ENCODE measurements at regions of chr18 and their contacts with region 1.

Region 1: DNA sequence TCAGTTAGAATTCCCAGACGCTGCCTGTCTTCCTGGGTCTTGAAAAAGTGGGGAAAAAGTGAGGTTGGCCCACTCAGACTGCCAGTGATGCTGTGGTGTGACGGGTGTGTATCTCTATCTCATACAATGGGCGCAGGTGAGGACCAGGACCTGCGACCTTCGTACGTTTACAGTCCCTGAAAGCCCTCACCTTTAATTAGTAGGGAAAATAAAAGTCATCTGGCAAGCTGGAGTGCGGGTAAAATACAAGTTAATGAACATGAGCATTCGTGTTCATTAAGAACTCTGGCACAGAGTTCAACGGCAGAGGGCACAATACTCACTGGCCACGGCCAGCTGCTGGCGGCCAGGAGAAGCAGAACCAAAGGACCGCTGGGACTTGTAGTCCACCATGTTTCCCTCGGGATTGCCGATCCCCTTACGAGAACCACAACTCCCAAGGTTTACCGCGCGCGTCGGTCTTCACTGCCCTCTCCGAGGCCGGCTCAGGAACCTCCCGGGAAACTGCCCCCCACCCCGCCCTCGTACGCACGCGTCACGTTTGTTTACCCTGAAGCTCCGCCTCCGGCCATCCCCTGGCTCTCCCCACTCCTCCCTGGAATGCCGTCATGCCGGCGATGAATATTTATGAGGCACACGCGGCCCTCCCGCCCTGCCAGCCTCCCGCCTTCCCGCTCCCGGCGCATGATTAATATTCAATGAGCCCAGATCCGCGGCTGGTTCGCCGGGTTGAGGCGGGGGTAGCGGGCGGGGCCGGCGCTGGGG is 488 bp upstream of the PHLPP1 start:
- DNase-seq: peak; percentile 96
- ATAC-seq: peak; percentile 81
- H3K4me3 ChIP-seq: peak overlapping the region; percentile 6 to 85 (median 75)
- H3K4me3 Mint-ChIP-seq: peak overlapping the region; percentile 95
- H3K27ac ChIP-seq: peak overlapping the region; percentile 85 to 92
- H3K27ac Mint-ChIP-seq: peak overlapping the region; percentile 97
- H3K4me1 ChIP-seq: peaks cover 15 to 18% of the 10 kb centered on the region in 2 donors
- H3K4me1 Mint-ChIP-seq: peaks cover 34% of the 10 kb centered on the region
- H3K27me3 ChIP-seq: no peaks in the 10 kb centered on the region
- H3K27me3 Mint-ChIP-seq: no peaks in the 10 kb centered on the region
- CTCF ChIP-seq: peak; percentile 77

Region 2: GRCh38 chr18:62505669-62506494 is 209.0 kb before region 1 on chr18:
- CTCF ChIA-PET with region 1: no interaction called
- POLR2A ChIA-PET with region 1: no interaction called
- intact Hi-C with region 1: loop called (anchors 5 kb)
- DNase-seq: peak; percentile 78
- ATAC-seq: peak; percentile 84
- H3K4me3 ChIP-seq: peak overlapping the region; percentile 27 to 58 (median 56)
- H3K4me3 Mint-ChIP-seq: peak overlapping the region; percentile 79
- H3K27ac ChIP-seq: peak overlapping the region; percentile 61 to 72
- H3K27ac Mint-ChIP-seq: peak overlapping the region; percentile 95
- H3K4me1 ChIP-seq: peaks cover 15 to 16% of the 10 kb centered on the region in 2 donors
- H3K4me1 Mint-ChIP-seq: peaks cover 13% of the 10 kb centered on the region
- H3K27me3 ChIP-seq: no peaks in the 10 kb centered on the region
- H3K27me3 Mint-ChIP-seq: no peaks in the 10 kb centered on the region
- CTCF ChIP-seq: no peak

Region 3: DNA sequence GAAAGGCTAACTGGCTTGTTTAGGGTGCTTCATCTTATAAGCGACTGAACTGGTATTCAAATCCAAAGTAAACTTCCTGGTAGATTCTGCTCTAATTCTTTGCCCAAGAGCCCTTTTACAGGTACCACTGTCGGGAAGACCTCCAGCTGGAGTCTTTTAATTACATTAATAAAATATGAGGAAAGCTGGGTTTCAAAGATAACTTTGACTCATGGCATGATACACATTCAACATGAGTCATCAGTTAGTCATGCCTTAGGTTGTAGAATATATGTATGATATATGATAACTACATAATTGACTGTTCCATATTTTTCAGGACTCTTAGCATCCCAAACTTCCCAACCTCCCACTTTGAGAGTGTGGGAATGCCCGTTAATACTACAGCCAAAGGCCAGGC is 159.7 kb before region 1 on chr18:
- CTCF ChIA-PET with region 1: no interaction called
- POLR2A ChIA-PET with region 1: no interaction called
- intact Hi-C with region 1: no loop called
- DNase-seq: no peak
- ATAC-seq: no peak
- H3K4me3 ChIP-seq: no peak overlapping the region
- H3K4me3 Mint-ChIP-seq: no peak overlapping the region
- H3K27ac ChIP-seq: no peak overlapping the region
- H3K27ac Mint-ChIP-seq: no peak overlapping the region
- H3K4me1 ChIP-seq: peaks cover 10% of the 10 kb centered on the region in 2 donors
- H3K4me1 Mint-ChIP-seq: peaks cover 26% of the 10 kb centered on the region
- H3K27me3 ChIP-seq: no peaks in the 10 kb centered on the region
- H3K27me3 Mint-ChIP-seq: no peaks in the 10 kb centered on the region
- CTCF ChIP-seq: no peak

Region 4: GRCh38 chr18:62729487-62730386 is 14.9 kb after region 1 on chr18:
- CTCF ChIA-PET with region 1: interaction called, 6 read pairs
- POLR2A ChIA-PET with region 1: no interaction called
- intact Hi-C with region 1: loop called (anchors 2 kb)
- DNase-seq: no peak
- ATAC-seq: no peak
- H3K4me3 ChIP-seq: no peak overlapping the region
- H3K4me3 Mint-ChIP-seq: peak overlapping the region; percentile 64
- H3K27ac ChIP-seq: no peak overlapping the region
- H3K27ac Mint-ChIP-seq: no peak overlapping the region
- H3K4me1 ChIP-seq: peaks cover 16 to 29% of the 10 kb centered on the region in 2 donors
- H3K4me1 Mint-ChIP-seq: peaks cover 37% of the 10 kb centered on the region
- H3K27me3 ChIP-seq: no peaks in the 10 kb centered on the region
- H3K27me3 Mint-ChIP-seq: no peaks in the 10 kb centered on the region
- CTCF ChIP-seq: no peak

Region 5: DNA sequence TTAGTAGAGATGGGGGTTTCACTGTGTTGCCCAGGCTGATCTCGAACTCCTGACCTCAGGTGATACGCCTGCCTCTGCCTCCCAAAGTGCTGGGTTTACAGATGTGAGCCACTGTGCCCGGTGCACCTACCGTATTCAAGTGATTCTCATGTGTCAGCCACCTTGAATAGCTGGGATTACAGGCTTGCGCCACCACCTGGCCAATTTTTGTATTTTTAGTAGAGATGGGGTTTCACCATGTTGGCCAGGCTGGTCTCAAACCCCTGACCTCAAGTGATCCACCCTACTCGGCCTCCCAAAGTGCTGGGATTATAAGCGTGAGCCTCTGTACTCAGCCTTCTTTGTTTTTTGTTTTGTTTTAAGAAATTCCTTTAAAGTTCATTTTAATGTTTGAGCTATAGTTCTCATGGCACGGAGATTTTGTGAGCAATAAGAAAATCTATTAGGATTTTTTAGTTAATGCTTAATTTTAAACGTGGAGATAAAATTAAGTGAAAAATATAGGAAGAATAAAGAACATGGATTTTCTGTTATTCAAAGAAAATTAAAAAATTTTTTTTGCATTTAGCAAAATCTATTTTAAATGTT is 243.1 kb after region 1 on chr18:
- CTCF ChIA-PET with region 1: interaction called, 29 read pairs
- POLR2A ChIA-PET with region 1: no interaction called
- intact Hi-C with region 1: loop called (anchors 1 kb)
- DNase-seq: peak; percentile 57
- ATAC-seq: peak; percentile 36
- H3K4me3 ChIP-seq: no peak overlapping the region
- H3K4me3 Mint-ChIP-seq: no peak overlapping the region
- H3K27ac ChIP-seq: no peak overlapping the region
- H3K27ac Mint-ChIP-seq: no peak overlapping the region
- H3K4me1 ChIP-seq: no peaks in the 10 kb centered on the region
- H3K4me1 Mint-ChIP-seq: no peaks in the 10 kb centered on the region
- H3K27me3 ChIP-seq: no peaks in the 10 kb centered on the region
- H3K27me3 Mint-ChIP-seq: no peaks in the 10 kb centered on the region
- CTCF ChIP-seq: peak; percentile 56

Region 6: DNA sequence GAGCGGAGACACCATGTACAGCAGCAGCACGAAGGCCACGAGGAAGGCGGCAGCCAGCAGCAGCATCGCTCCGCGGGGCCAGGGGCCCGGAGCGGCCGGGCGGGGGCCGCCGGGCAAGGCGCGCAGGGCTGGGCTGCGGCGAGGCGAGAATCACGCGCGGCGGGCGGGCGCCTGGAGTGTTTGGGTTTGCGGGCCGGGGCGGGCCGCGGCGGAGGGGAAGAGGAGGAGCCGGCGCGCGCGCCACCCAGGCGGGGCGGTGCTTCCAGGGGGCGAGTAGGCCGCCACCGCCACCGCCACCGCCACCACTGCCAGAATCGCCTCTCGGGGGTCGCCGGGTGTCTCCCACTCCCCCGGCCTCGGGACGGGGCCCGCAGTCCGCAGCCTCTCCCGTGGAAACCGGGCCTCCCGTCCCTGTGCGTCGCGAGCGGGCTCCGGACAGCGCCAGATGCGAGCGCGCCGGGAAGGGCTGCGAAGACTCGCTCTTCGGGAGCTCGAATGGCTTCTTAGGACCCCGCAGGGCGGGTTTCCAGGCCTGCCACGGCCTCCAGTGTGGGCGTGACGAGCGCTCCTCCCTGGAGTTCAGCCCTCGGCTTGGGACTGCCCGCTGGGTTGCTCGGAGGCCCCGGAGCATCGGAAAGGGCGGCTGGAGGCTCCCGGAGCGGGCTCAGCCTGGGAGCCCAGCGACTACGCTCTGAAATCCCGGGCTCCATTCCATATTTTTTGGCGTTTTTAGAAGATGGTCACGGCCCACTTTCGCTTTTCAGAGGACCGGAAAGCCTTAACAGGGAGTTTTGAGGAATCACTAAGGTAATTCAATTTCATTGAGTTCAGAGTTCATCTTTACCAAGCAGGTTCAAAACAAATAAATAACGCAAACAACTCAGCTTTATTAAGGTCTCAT is 652.5 kb after region 1 on chr18 and contains the start of gene KDSR:
- CTCF ChIA-PET with region 1: no interaction called
- POLR2A ChIA-PET with region 1: no interaction called
- intact Hi-C with region 1: loop called (anchors 1 kb)
- DNase-seq: peak; percentile 89
- ATAC-seq: peak; percentile 93
- H3K4me3 ChIP-seq: peak within 1 kb of the TSS; percentile 83 to 94 (median 85)
- H3K4me3 Mint-ChIP-seq: peak within 1 kb of the TSS; percentile 90
- H3K27ac ChIP-seq: peak within 1 kb of the TSS; percentile 51 to 71
- H3K27ac Mint-ChIP-seq: peak within 1 kb of the TSS; percentile 89
- H3K4me1 ChIP-seq: peaks cover 11 to 13% of the 10 kb centered on the region in 2 donors
- H3K4me1 Mint-ChIP-seq: peaks cover 26% of the 10 kb centered on the region
- H3K27me3 ChIP-seq: no peaks in the 10 kb centered on the region
- H3K27me3 Mint-ChIP-seq: no peaks in the 10 kb centered on the region
- CTCF ChIP-seq: no peak
- total RNA-seq, gene KDSR: 21.1 and 26.4 TPM in 2 replicates